Sigmoid colon (tissue), 7 donors: ENCODE measurements at regions of chr18 and their contacts with region 1.

Region 1: DNA sequence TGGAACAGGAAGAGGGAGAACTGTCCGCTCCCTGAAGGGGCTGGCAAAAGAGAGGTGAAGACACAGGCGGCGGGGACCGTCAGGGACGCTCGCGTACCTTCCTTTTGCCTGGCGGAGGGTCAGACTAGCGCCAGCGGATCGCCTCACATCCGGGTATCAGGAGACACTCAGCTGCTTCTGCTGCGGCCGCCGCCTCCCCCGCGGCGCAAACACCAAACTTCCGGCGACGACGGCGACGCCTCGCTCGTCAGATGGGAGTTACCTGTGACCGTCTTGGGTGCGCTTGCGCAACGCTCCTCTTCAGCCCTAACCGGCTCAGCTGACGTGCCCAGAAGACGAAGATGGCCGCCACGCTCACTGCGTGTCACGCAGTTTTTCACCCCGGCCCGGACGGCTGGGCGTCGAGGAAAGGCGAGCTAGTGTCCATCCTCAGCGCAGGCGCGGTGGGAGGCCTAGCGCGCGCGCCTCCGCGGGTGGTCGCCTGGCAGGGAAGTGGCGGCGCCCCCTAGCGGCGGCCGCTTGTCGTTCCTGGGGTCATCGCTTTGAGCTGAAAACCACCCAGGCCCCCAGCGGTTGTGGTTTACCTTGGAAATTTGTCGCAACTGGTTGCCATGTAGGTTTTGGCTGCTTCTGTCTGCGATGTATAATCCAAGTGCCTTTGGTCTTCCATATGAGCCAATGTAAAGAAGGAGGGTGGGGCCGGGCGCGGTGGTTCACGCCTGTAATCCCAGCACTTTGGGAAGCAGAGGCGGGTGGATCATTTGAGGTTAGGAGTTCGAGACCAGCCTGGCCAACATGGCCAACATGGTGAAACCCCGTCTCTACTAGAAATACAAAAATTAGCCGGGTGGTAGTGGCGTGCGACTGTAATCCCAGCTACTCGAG is at the start of gene ESCO1:
- DNase-seq: peak; percentile 99
- H3K4me3 ChIP-seq: peak within 1 kb of the TSS; percentile 71 to 97 (median 78)
- H3K27ac ChIP-seq: peak within 1 kb of the TSS; percentile 91 to 97 (median 94)
- H3K4me1 ChIP-seq: peaks cover 0 to 23% (median 14%) of the 10 kb centered on the region in 4 donors
- H3K27me3 ChIP-seq: no peaks in the 10 kb centered on the region
- CTCF ChIP-seq: peak; percentile 96 to 98 (median 97)
- EP300 ChIP-seq: peak in 2 of 4 donors; percentile 54 to 65
- POLR2A ChIP-seq: peak; percentile 78 to 83
- total RNA-seq, gene ESCO1: 12.8 to 20.0 (median 18.9) TPM

Region 2: DNA sequence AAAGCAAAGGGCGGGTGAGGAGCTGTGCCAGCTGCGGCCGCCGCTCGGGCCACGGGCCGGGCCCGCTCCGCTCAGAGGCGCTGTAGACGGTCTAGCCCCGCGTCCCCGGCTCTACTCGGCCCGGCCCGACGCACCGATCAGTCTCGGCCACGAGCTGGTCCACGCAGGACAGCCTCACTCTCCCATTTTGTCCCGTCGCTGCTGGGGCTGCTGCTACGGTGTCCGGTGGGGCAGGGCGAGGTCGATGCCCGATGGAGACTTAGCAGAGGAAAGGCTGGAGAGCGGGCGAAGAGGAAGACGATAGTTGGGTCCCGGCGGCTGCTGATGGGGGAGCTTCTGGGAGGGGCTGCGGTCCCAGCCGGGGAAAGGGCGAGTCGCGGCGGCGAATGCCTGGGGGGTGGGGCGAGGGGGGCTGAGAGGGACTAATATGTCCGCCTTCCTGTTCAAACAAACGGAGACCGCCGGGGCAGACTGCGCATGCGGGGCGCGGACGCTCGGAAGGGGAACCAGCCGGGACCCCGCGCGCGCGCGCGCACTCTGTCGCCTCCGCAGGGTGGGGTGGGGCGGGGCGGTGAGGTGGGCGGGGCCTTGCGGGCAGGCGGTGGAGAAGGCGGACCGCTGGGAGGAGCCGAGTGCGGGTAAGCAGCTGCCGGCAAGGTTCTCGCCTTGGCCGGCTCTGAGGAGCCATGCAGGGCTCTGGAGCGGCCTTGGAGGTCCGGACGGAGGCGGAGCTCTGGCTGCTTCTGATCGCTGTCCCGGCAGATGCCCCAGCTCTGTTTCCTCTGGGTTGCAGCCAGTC is 489.2 kb before region 1 on chr18 and contains the start of gene ROCK1:
- intact Hi-C with region 1: loop called (anchors 10 kb)
- DNase-seq: peak; percentile 99
- H3K4me3 ChIP-seq: peak within 1 kb of the TSS; percentile 70 to 98 (median 86)
- H3K27ac ChIP-seq: peak within 1 kb of the TSS; percentile 93 to 99 (median 96)
- H3K4me1 ChIP-seq: peaks cover 0 to 47% (median 33%) of the 10 kb centered on the region in 4 donors
- H3K27me3 ChIP-seq: no peaks in the 10 kb centered on the region
- CTCF ChIP-seq: no peak
- EP300 ChIP-seq: no peak
- POLR2A ChIP-seq: peak in 1 of 2 donors; percentile 34
- total RNA-seq, gene ROCK1: 55.8 to 86.7 (median 57.7) TPM

Region 3: GRCh38 chr18:21191596-21192307 is 409.0 kb before region 1 on chr18:
- intact Hi-C with region 1: loop called (anchors 2 kb)
- DNase-seq: no peak
- H3K4me3 ChIP-seq: no peak overlapping the region
- H3K27ac ChIP-seq: no peak overlapping the region
- H3K4me1 ChIP-seq: no peaks in the 10 kb centered on the region
- H3K27me3 ChIP-seq: no peaks in the 10 kb centered on the region
- CTCF ChIP-seq: peak in 2 of 4 experiments; percentile 20 to 32
- EP300 ChIP-seq: no peak
- POLR2A ChIP-seq: no peak

Region 4: GRCh38 chr18:21557607-21558253 is 43.0 kb before region 1 on chr18:
- intact Hi-C with region 1: no loop called
- DNase-seq: no peak
- H3K4me3 ChIP-seq: no peak overlapping the region
- H3K27ac ChIP-seq: no peak overlapping the region
- H3K4me1 ChIP-seq: no peaks in the 10 kb centered on the region
- H3K27me3 ChIP-seq: no peaks in the 10 kb centered on the region
- CTCF ChIP-seq: no peak
- EP300 ChIP-seq: no peak
- POLR2A ChIP-seq: no peak

Region 5: GRCh38 chr18:21612125-21612991 is 11.6 kb after region 1 on chr18 and contains the start of gene SNRPD1:
- intact Hi-C with region 1: loop called (anchors 1 kb)
- DNase-seq: peak; percentile 89
- H3K4me3 ChIP-seq: peak within 1 kb of the TSS; percentile 41 to 69 (median 63)
- H3K27ac ChIP-seq: peak within 1 kb of the TSS; percentile 76 to 83 (median 78)
- H3K4me1 ChIP-seq: peaks cover 0 to 22% (median 15%) of the 10 kb centered on the region in 4 donors
- H3K27me3 ChIP-seq: no peaks in the 10 kb centered on the region
- CTCF ChIP-seq: peak; percentile 69 to 92 (median 90)
- EP300 ChIP-seq: no peak
- POLR2A ChIP-seq: no peak
- total RNA-seq, gene SNRPD1: 5.2 to 10.3 (median 6.5) TPM